HCT116 (cell line): ENCODE measurements at regions of chr2 and their contacts with region 1.

Region 1: DNA sequence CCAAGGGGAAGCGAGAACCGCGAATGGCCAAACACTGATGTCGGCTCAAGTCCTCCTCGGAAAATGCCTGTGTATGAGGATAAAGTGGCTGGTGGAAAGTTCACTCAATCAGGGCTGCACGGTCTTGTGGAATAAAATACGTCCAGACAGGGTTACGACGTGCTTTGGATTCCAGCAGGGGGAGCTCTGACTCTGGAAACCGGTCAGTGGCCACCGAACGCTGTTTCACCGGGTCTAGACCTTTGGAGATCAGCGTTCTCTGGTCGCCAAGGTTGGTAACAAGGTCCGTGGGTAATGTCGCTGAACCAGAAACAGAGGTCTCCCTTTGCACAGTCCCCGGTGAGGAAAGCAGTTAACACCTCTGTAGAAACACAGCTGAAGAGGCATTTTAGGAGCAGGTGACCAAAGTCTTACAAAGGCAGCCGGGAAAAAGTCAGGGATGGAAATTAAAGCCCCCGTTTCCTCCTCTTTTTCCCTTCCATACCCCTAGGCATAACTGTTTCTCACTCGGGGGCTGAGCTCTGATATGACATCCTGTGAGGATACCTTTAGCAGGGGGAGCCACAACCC is 47.8 kb downstream of the CDCA7 start:
- DNase-seq: peak; percentile 80
- ATAC-seq: peak; percentile 96
- H3K4me3 ChIP-seq: peak overlapping the region; percentile 19 to 35
- H3K27ac ChIP-seq: no peak overlapping the region
- H3K4me1 ChIP-seq: peaks cover 0 to 14% of the 10 kb centered on the region in 2 experiments; a peak in 1 of 4 replicates
- H3K27me3 ChIP-seq: no peaks in the 10 kb centered on the region
- CTCF ChIP-seq: peak; percentile 85 to 91 (median 88)
- POLR2A ChIP-seq: no peak
- RAD21 ChIP-seq: peak; percentile 98

Region 2: GRCh38 chr2:172813314-172813888 is 589.1 kb before region 1 on chr2:
- CTCF ChIA-PET with region 1: interaction called, 12 read pairs
- POLR2A ChIA-PET with region 1: no interaction called
- RAD21 ChIA-PET with region 1: no interaction called
- intact Hi-C with region 1: no loop called
- DNase-seq: no peak
- ATAC-seq: peak; percentile 84
- H3K4me3 ChIP-seq: no peak overlapping the region
- H3K27ac ChIP-seq: no peak overlapping the region
- H3K4me1 ChIP-seq: no peaks in the 10 kb centered on the region
- H3K27me3 ChIP-seq: 0 out of 2 replicates have a peak, but pooled peaks cover 6% of the 10 kb centered on the region
- CTCF ChIP-seq: peak; percentile 38 to 55 (median 51); a peak in 5 of 6 replicates
- POLR2A ChIP-seq: no peak
- RAD21 ChIP-seq: peak; percentile 70

Region 3: GRCh38 chr2:173448938-173449471 is 46.5 kb after region 1 on chr2:
- CTCF ChIA-PET with region 1: interaction called, 42 read pairs
- POLR2A ChIA-PET with region 1: no interaction called
- RAD21 ChIA-PET with region 1: interaction called, 6 read pairs
- intact Hi-C with region 1: loop called (anchors 1 kb)
- DNase-seq: peak; percentile 85
- ATAC-seq: peak; percentile 94
- H3K4me3 ChIP-seq: peak overlapping the region; percentile 39 to 58
- H3K27ac ChIP-seq: peak overlapping the region; percentile 53
- H3K4me1 ChIP-seq: peaks cover 2 to 6% of the 10 kb centered on the region in 2 experiments; a peak in 2 of 4 replicates
- H3K27me3 ChIP-seq: no peaks in the 10 kb centered on the region
- CTCF ChIP-seq: peak; percentile 70 to 93 (median 87)
- POLR2A ChIP-seq: peak; percentile 65
- RAD21 ChIP-seq: peak; percentile 80

Region 4: GRCh38 chr2:173667417-173667816 is 264.9 kb after region 1 on chr2:
- CTCF ChIA-PET with region 1: no interaction called
- POLR2A ChIA-PET with region 1: no interaction called
- RAD21 ChIA-PET with region 1: no interaction called
- intact Hi-C with region 1: loop called (anchors 2 kb)
- DNase-seq: peak; percentile 10
- ATAC-seq: peak; percentile 80
- H3K4me3 ChIP-seq: no peak overlapping the region
- H3K27ac ChIP-seq: no peak overlapping the region
- H3K4me1 ChIP-seq: peaks cover 0 to 3% of the 10 kb centered on the region in 2 experiments; a peak in 1 of 4 replicates
- H3K27me3 ChIP-seq: no peaks in the 10 kb centered on the region
- CTCF ChIP-seq: peak; percentile 20 to 55 (median 34); a peak in 3 of 6 replicates
- POLR2A ChIP-seq: no peak
- RAD21 ChIP-seq: peak; percentile 70

Region 5: GRCh38 chr2:173884025-173884802 is 481.7 kb after region 1 on chr2:
- CTCF ChIA-PET with region 1: interaction called, 3 read pairs
- POLR2A ChIA-PET with region 1: no interaction called
- RAD21 ChIA-PET with region 1: interaction called in 1 of 2 experiments, 4 read pairs
- intact Hi-C with region 1: loop called (anchors 10 kb)
- DNase-seq: peak; percentile 47
- ATAC-seq: peak; percentile 93
- H3K4me3 ChIP-seq: no peak overlapping the region
- H3K27ac ChIP-seq: no peak overlapping the region
- H3K4me1 ChIP-seq: no peaks in the 10 kb centered on the region
- H3K27me3 ChIP-seq: no peaks in the 10 kb centered on the region
- CTCF ChIP-seq: peak; percentile 69 to 86 (median 85); a peak in 5 of 6 replicates
- POLR2A ChIP-seq: no peak
- RAD21 ChIP-seq: peak; percentile 72

Region 6: DNA sequence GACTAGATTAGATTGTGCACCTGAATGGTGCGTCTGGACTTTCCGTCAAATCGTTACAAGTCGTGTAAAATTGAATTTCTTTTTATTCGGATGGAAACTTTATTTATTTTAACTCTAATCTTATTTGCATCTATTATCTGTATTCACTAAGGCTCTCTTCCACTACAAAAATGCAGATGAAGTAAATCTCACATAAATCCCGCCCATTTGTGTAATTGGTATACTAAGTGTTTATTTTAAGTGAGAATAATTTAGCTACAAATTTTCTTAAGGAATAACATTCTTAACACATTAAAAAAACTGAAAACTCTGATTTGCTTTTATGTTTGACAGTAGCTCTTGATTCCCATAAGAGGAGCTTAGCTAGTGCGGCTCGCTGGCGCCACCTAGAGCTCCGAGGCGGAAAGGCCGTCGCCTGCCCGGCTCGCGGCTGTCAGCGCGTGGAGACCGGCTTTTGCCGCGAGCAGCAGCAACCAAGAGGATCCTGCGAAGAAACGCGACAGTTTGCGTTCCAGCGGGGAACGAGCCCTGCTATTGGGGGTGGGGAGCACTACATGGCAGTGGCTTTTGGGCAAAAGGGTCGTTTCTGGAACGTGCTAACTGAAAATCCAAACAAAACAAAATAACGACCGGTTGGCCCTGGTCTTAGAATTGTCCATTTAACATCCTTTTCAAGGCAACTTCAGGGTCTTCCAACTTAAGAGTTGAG is 939.0 kb after region 1 on chr2:
- CTCF ChIA-PET with region 1: interaction called, 33 read pairs
- POLR2A ChIA-PET with region 1: interaction called, 3 read pairs
- RAD21 ChIA-PET with region 1: interaction called in 1 of 2 experiments, 3 read pairs
- intact Hi-C with region 1: loop called (anchors 1 kb)
- DNase-seq: peak; percentile 58
- ATAC-seq: peak; percentile 54
- H3K4me3 ChIP-seq: no peak overlapping the region
- H3K27ac ChIP-seq: no peak overlapping the region
- H3K4me1 ChIP-seq: peaks cover 0 to 27% of the 10 kb centered on the region in 2 experiments; a peak in 2 of 4 replicates
- H3K27me3 ChIP-seq: no peaks in the 10 kb centered on the region
- CTCF ChIP-seq: peak; percentile 92 to 99 (median 97)
- POLR2A ChIP-seq: no peak
- RAD21 ChIP-seq: peak; percentile 99